ENCODE measurements at regions of chr6 and their contacts with region 1.

Region 1: DNA sequence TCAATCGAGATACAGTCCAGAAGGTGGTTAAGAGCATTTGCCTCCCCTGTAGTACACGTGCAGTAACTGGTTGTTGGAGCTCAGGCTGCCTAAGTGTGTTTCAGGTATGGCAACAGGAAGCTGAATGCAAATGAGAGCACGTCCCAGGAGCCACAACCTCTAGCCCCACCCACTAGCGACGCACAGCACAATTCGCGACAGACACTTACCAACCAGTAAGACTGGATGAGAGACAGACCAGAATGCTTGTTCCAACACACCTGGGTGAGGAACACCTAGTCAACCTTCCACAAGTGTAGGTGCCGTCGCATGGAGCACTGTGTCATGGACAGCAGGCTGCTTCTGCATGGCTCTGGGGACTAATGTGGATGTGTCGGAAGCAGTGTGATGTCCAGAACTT is 7.2 kb upstream of the SERPINB1 start:
- DNase-seq: peak; percentile 96
- H3K4me3 ChIP-seq: peak overlapping the region; percentile 74
- H3K27ac ChIP-seq: peak overlapping the region; percentile 96
- H3K4me1 ChIP-seq: peaks cover 64% of the 10 kb centered on the region
- CTCF ChIP-seq: no peak

Region 2: GRCh38 chr6:2684059-2684749 is 164.6 kb before region 1 on chr6:
- CTCF ChIA-PET with region 1: no interaction called
- POLR2A ChIA-PET with region 1: no interaction called
- intact Hi-C with region 1: no loop called
- DNase-seq: no peak
- H3K4me3 ChIP-seq: no peak overlapping the region
- H3K27ac ChIP-seq: no peak overlapping the region
- H3K4me1 ChIP-seq: no peaks in the 10 kb centered on the region
- CTCF ChIP-seq: no peak

Region 3: DNA sequence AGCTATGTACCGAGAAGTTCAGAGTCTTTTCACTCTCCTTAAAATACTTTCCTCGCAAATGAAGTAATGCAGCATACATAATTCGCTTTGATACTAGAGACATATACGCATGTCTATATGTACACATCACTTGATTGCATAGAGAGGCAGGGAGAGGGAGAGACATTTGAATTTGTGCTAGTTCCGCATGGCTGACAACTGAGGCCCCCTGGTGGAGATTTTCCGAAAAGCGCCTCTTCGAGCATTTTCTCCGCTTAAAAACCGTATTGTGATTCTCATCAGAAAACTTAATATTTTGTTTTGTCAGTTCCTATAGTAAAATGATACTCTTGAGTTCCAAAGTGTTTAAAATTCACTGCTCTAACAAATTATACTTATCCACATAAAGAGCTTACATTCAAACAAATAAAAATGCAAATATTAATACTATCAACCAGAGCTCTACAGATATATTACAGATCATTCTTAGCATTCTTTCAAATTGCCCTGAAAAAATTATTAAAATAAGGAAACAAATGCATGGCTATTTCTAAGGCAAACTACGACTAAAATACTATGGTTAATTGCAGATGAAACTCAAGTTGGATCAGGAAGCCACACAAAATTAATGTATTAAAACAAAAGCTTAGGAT is 98.8 kb before region 1 on chr6:
- CTCF ChIA-PET with region 1: no interaction called
- POLR2A ChIA-PET with region 1: no interaction called
- intact Hi-C with region 1: no loop called
- DNase-seq: peak; percentile 73
- H3K4me3 ChIP-seq: no peak overlapping the region
- H3K27ac ChIP-seq: no peak overlapping the region
- H3K4me1 ChIP-seq: peaks cover 3% of the 10 kb centered on the region
- CTCF ChIP-seq: peak; percentile 99

Region 4: GRCh38 chr6:2791124-2791974 is 57.5 kb before region 1 on chr6:
- CTCF ChIA-PET with region 1: no interaction called
- POLR2A ChIA-PET with region 1: interaction called, 6 read pairs
- intact Hi-C with region 1: loop called (anchors 1 kb)
- DNase-seq: peak; percentile 75
- H3K4me3 ChIP-seq: no peak overlapping the region
- H3K27ac ChIP-seq: no peak overlapping the region
- H3K4me1 ChIP-seq: no peaks in the 10 kb centered on the region
- CTCF ChIP-seq: peak; percentile 90

Region 5: DNA sequence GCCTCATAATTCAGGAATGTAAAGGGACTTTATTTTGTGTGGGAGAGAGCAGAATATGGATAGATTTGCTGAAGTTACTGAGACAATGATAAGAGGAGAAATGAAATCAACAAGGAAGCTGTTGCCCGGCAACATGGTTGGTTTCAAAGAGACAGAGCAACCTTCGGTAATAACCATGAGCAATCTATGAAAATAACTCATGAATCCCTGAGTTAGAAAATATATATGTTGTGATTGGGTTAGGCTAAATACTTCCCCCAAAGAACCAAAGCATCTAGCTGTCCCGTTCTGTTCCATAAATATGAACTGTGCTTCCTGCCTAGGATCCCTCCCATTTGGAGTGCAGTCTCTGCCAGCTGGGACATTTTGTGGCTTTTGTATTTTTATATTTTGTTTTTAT is 30.3 kb before region 1 on chr6:
- CTCF ChIA-PET with region 1: no interaction called
- POLR2A ChIA-PET with region 1: no interaction called
- intact Hi-C with region 1: no loop called
- DNase-seq: no peak
- H3K4me3 ChIP-seq: no peak overlapping the region
- H3K27ac ChIP-seq: no peak overlapping the region
- H3K4me1 ChIP-seq: no peaks in the 10 kb centered on the region
- CTCF ChIP-seq: no peak

Region 6: DNA sequence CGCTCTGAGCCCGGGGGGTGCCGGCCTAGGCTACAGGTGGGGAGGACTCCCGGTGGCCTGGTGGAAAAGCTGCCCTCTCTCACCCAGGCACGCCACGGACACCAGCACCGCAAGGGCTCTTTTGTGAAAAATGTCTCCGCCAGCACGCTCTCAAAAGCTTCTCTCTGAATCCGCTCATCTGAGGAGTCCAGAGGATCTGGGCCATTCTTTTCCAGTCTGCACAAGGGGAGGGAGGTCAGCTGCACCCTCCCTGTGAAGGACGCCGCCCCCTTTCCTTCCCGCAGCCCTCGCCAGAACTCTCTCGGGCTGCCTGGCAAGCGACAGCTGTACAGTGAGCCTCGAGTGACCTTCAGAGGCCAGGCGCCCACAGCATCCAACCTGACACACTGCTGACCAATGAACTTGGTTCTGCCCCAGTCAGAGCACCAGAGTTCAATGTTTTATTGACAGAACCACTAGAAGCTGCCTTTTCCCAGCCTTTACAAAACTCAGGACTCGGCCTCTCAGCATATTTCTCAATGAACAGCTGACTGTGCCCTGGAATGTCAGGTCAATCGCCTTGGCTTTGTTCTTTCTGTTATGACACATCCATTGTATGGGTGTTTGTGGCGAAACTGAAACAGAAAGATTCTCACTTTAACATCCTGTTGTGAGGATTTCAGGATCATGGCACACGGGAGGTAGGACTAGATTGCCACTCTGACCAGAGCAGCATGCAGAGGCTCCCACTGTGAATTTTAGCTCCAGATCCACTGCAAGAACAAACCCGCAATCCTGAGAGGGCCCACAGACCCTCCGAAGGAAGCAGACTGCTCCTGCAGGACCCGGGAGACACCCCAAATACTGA is 27.6 kb after region 1 on chr6:
- CTCF ChIA-PET with region 1: no interaction called
- POLR2A ChIA-PET with region 1: interaction called, 88 read pairs
- intact Hi-C with region 1: no loop called
- DNase-seq: peak; percentile 58
- H3K4me3 ChIP-seq: peak overlapping the region; percentile 67
- H3K27ac ChIP-seq: peak overlapping the region; percentile 79
- H3K4me1 ChIP-seq: peaks cover 88% of the 10 kb centered on the region
- CTCF ChIP-seq: no peak

Region 7: GRCh38 chr6:2900821-2901644 is 52.2 kb after region 1 on chr6:
- CTCF ChIA-PET with region 1: interaction called, 7 read pairs
- POLR2A ChIA-PET with region 1: interaction called, 70 read pairs
- intact Hi-C with region 1: no loop called
- DNase-seq: no peak
- H3K4me3 ChIP-seq: peak overlapping the region; percentile 73
- H3K27ac ChIP-seq: peak overlapping the region; percentile 81
- H3K4me1 ChIP-seq: peaks cover 69% of the 10 kb centered on the region
- CTCF ChIP-seq: no peak

Region 8: DNA sequence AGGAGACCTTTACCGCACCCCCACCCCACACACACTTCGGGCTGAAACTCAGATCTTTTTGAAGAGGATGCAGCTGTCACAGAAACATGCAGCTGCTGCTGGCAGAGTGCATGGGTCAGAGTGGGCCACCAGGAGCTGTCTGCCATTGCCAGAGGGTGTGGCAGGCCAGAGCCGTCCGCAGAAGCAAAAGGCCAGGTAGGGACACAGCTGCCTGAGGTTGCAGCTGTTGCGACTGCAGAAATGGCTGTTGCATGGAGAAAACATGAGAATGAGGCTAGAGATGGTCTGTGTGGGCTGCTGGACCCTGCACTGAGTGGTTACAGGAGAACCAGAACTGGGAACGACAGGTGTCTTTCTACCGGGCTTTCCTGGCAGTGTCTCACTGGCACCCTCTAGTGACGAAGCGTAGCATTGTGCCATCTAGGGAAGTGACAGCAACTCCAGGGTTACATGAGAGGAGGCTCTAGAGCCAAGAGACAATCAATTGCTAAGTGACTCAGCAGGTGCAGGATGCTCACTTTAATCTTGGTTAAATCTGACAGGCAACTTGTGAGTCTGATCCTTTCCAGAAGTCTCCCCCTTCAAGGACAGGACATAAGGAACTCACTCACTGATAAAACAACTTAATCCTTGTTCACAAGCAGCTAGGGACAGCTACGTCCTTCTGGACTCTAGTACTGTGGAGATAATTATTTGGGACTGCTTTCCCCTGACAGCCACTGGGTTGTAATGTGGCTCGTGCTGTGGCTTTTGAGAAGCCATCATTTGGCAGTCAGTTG is 83.3 kb after region 1 on chr6:
- CTCF ChIA-PET with region 1: interaction called, 30 read pairs
- POLR2A ChIA-PET with region 1: interaction called, 20 read pairs
- intact Hi-C with region 1: loop called (anchors 1 kb)
- DNase-seq: peak; percentile 90
- H3K4me3 ChIP-seq: peak overlapping the region; percentile 51
- H3K27ac ChIP-seq: peak overlapping the region; percentile 30
- H3K4me1 ChIP-seq: peaks cover 25% of the 10 kb centered on the region
- CTCF ChIP-seq: peak; percentile 99

Region 9: DNA sequence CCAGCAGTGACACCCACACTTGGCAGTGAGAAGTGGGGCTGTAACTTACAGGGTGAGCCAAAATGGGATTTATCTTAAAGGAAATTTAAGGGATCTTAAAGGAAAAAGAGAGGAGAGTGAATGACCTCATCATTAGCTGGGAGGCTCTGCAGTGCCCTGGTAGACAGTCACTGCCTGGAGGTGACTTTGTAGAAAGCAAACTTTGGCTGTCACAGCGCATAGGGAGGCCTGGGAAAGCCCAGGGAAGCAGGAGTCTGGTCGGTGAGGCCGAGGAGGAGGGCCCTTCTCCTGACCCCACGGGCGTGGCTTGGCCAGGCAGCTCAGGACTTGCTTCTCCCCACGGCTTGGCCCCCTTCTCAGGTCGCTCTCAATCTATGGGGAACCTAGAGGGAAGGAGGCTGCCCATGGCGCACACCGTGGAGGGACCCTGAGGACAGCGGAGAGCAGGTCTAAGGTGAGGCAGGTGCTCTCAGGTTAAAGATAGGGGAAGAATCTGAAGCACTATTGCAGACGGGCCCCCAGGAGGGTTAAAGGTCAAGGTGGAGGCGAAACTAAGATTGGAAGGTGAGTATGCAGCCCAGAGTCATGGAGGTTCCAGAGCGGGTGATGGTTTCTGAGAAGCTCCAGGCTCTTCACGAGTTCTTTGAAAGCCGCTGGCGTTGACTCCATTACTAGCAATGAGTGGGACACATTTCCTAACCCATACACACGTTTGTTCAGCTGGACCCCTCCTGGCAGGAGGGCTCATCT is 203.8 kb after region 1 on chr6:
- CTCF ChIA-PET with region 1: no interaction called
- POLR2A ChIA-PET with region 1: interaction called, 4 read pairs
- intact Hi-C with region 1: loop called (anchors 1 kb)
- DNase-seq: no peak
- H3K4me3 ChIP-seq: peak overlapping the region; percentile 68
- H3K27ac ChIP-seq: no peak overlapping the region
- H3K4me1 ChIP-seq: peaks cover 22% of the 10 kb centered on the region
- CTCF ChIP-seq: no peak

Measured in OCI-LY7 (cell line).